ENCODE measurements at regions of chr14 and their contacts with region 1.

Region 1: DNA sequence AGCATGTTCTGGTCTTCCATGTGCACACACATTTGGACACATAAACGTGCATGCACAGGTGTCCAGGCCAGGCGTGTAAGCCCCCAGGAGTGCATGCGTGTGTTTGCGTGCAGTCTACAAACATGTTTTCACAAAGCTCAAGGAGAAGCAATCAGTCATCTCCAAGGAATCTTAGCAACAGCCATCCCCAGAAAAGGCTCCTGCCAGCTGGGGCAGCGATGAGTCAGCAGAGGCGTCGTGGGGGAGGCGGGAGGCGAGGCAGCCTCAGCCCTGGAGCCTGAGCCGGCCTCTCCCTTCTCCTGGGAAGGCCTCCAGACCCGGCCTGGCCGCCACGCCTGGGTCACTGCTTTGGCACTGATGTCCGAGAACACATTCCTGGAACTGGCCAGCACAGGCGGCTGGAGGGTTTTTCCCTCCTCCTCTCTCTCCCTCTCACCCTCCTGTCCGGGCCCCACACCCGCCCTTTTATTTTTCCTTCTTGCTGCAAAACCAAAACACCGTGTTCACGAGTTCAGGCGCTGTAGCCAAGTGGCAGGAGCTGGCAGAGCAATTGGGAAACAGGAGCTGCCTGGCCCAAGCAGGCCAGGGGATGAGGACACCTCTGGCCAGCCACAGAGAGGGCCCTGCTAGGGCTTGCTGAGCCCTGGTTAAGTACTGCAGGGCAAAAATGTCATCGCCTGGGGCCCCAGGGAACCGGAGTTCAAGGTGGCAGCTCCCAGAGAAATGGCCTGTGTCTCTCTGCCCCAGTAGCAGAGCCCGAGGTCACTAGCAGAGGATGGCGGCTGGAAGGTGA is 92.7 kb downstream of the LRRC74A start:
- DNase-seq: no peak
- H3K4me3 Mint-ChIP-seq: no peak overlapping the region
- H3K27ac Mint-ChIP-seq: no peak overlapping the region
- H3K4me1 Mint-ChIP-seq: peaks cover 78% of the 10 kb centered on the region
- H3K27me3 Mint-ChIP-seq: peaks cover 22% of the 10 kb centered on the region

Region 2: GRCh38 chr14:76937181-76938091 is 18.5 kb after region 1 on chr14:
- CTCF ChIA-PET with region 1: interaction called, 31 read pairs
- DNase-seq: no peak
- H3K4me3 Mint-ChIP-seq: no peak overlapping the region
- H3K27ac Mint-ChIP-seq: no peak overlapping the region
- H3K4me1 Mint-ChIP-seq: peaks cover 25% of the 10 kb centered on the region
- H3K27me3 Mint-ChIP-seq: peaks cover 21% of the 10 kb centered on the region

Region 3: GRCh38 chr14:76956316-76957090 is 37.6 kb after region 1 on chr14:
- CTCF ChIA-PET with region 1: interaction called, 55 read pairs
- DNase-seq: peak; percentile 92
- H3K4me3 Mint-ChIP-seq: peak overlapping the region; percentile 81
- H3K27ac Mint-ChIP-seq: peak overlapping the region; percentile 98
- H3K4me1 Mint-ChIP-seq: peaks cover 88% of the 10 kb centered on the region
- H3K27me3 Mint-ChIP-seq: no peaks in the 10 kb centered on the region

Region 4: DNA sequence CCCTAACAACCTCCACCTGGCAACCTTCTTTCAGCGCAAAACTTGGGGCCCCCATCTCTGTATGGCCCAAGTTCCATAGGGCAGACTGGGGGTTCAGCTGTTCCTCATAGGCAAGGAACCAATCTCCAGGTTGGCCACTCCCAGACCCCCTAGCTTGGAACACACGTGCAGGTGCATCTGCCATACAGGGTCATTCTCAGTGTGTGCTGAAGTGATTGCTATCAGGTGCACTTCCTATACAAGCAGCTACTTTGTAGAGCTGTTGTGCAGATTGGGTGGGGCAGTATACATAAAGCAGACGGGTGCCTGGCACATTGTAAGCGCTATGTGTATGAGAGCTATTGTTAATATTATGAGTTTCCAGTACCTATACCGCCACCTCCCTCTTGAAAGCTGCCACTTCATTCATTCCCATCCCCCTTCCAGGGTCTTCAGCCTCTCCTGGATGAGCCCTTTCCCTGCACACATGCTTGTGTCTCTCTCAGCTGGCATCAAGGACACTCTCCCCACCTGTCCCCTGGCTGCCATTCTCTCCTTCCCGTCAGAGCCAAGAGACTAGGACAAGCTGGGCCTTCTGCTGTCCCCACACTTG is 92.3 kb after region 1 on chr14:
- CTCF ChIA-PET with region 1: interaction called, 21 read pairs
- DNase-seq: peak; percentile 38
- H3K4me3 Mint-ChIP-seq: no peak overlapping the region
- H3K27ac Mint-ChIP-seq: peak overlapping the region; percentile 7
- H3K4me1 Mint-ChIP-seq: peaks cover 19% of the 10 kb centered on the region
- H3K27me3 Mint-ChIP-seq: peaks cover 50% of the 10 kb centered on the region